ENCODE measurements at regions of chr2 and their contacts with region 1.

Region 1: DNA sequence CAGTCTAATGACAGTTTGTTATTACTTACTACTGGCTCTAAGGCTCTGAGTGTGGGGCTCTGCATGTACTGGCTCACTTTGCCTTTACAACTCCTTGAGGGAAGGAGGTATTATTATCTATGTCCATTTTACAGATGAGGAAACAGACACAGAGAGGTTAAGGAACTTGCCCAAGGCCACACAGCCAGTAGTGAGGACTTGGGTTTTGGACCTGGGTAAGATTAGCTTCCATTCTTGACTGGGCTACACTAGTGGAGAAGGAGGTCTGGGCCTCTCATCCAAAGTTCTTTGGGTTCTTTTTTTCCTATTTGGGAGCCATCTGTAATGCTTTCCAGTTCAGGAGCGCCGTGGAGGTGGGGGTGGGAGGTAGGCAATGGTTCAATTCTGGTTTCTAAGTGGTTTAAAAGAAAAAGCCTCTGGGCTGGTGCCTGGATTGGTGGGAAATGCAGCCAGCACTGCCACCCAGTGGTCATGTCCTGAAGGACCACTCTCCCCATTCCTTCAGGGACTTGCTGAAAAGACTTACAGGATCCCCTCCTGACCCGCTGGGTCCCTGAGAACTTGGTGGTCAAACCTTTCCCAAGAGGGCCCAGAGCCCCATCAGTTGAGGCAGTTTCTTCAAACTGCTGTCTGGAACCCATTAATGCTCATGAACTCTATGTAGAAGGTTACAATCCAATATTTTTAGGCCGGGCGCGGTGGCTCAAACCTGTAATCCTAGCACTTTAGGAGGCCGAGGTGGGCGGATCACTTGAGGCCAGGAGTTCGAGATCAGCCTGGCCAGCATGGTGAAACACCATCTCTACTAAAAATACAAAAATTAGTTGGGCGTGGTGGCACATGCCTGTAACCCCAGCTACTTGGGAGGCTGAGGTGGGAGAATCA is 38.6 kb upstream of the NOTO start:
- DNase-seq: peak; percentile 61 to 74
- ATAC-seq: peak; percentile 81 to 92 (median 84)
- H3K4me3 ChIP-seq: no peak overlapping the region
- H3K27ac ChIP-seq: no peak overlapping the region
- H3K4me1 ChIP-seq: no peaks in the 10 kb centered on the region
- H3K27me3 ChIP-seq: no peaks in the 10 kb centered on the region
- CTCF ChIP-seq: peak; percentile 88

Region 2: DNA sequence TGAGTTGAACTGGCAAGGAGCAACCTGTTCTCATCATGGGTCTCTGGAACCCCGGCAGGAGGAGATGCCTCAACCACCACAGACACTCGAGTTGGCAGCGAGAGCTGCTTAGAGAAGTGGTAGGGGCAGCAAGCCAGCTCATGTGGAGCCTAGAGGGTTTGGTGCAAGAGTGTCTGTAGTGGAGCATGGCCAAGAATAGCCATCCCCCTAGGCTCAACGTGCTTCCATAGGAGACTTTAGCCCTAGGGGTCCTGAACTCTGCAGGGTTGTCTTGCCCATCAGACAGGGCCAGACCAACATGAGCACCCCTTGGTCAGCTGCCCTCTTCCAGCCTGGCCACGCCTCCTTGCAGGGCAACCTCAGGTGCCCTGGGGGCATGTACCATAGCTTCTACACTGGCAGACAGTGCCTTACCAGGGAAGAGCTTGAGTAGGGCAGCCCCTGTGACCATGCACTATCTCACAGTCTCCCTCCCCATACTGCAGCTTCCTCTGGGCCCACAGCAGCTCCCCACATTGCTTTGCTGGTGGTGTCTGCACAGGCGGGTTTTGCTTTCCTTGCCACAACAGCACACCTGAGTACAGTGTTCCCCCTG is 525.0 kb before region 1 on chr2:
- intact Hi-C with region 1: no loop called
- DNase-seq: no peak
- ATAC-seq: no peak
- H3K4me3 ChIP-seq: no peak overlapping the region
- H3K27ac ChIP-seq: no peak overlapping the region
- H3K4me1 ChIP-seq: no peaks in the 10 kb centered on the region
- H3K27me3 ChIP-seq: no peaks in the 10 kb centered on the region
- CTCF ChIP-seq: no peak

Region 3: GRCh38 chr2:72892506-72893173 is 271.1 kb before region 1 on chr2:
- intact Hi-C with region 1: loop called in 1 of 2 experiments (anchors 5 kb)
- DNase-seq: peak; percentile 63 to 74
- ATAC-seq: peak; percentile 69 to 81 (median 80)
- H3K4me3 ChIP-seq: no peak overlapping the region
- H3K27ac ChIP-seq: no peak overlapping the region
- H3K4me1 ChIP-seq: peaks cover 19% of the 10 kb centered on the region
- H3K27me3 ChIP-seq: peaks cover 0 to 17% (median 4%) of the 10 kb centered on the region in 3 donors
- CTCF ChIP-seq: peak; percentile 69

Region 4: GRCh38 chr2:72993147-72993932 is 170.4 kb before region 1 on chr2:
- intact Hi-C with region 1: loop called (anchors 2 to 5 kb)
- DNase-seq: peak in 1 of 2 donors; percentile 44
- ATAC-seq: peak; percentile 43 to 75 (median 58)
- H3K4me3 ChIP-seq: no peak overlapping the region
- H3K27ac ChIP-seq: no peak overlapping the region
- H3K4me1 ChIP-seq: no peaks in the 10 kb centered on the region
- H3K27me3 ChIP-seq: no peaks in the 10 kb centered on the region
- CTCF ChIP-seq: peak; percentile 77

Region 5: GRCh38 chr2:73257425-73258125 is 93.8 kb after region 1 on chr2:
- intact Hi-C with region 1: loop called in 1 of 2 experiments (anchors 5 kb)
- DNase-seq: peak in 1 of 2 donors; percentile 64
- ATAC-seq: no peak
- H3K4me3 ChIP-seq: no peak overlapping the region
- H3K27ac ChIP-seq: no peak overlapping the region
- H3K4me1 ChIP-seq: no peaks in the 10 kb centered on the region
- H3K27me3 ChIP-seq: no peaks in the 10 kb centered on the region
- CTCF ChIP-seq: no peak

Region 6: DNA sequence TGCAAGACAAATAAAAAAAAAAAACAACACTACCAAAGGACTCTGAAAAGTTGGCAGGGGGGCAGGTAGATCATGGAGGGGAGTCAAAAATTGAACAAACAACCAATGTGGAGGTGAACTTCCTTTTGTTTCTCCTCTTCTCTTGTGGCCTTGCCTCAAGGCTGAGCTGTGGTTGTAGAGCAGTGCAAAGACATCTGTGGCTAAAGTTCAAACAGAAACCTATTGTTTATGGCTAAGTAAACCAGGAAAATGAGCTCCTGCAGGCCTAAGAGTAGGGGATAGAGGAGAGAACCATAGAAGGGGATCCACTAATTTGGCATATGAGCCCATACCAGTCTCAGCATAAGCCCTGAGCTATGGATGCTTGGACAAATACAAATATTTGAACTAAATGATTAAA is 169.8 kb after region 1 on chr2:
- intact Hi-C with region 1: no loop called
- DNase-seq: no peak
- ATAC-seq: no peak
- H3K4me3 ChIP-seq: no peak overlapping the region
- H3K27ac ChIP-seq: no peak overlapping the region
- H3K4me1 ChIP-seq: no peaks in the 10 kb centered on the region
- H3K27me3 ChIP-seq: no peaks in the 10 kb centered on the region
- CTCF ChIP-seq: no peak

Measured in psoas muscle (tissue), 8 donors.